Motor neuron (in vitro differentiated cells): ENCODE measurements at regions of chr10 and their contacts with region 1.

Region 1: DNA sequence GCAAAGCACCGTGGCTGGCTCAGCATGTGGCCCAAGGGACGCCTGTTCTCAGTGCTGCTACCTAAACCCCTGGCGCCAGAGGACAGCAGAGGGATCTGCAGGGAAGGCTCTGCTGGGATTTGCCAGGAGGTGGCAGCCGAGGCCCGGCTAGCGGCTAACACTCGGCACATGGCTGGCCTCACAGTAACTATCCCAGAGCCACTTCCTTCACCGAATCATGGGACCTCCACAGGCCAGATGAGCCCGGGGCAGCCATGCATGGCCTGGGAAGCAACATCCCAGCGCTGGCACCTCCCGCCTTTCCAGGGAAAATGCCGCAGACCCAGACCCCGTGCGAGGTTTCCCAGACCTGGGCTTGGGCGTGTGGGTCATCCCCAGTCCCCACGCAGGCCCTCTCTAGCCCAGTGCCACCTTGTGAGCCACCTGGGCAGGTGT is 36.4 kb downstream of the DPYSL4 start:
- ATAC-seq: peak; percentile 97 to 100 (median 99)
- H3K4me3 ChIP-seq: no peak overlapping the region
- H3K27ac ChIP-seq: no peak overlapping the region
- H3K4me1 ChIP-seq: peaks cover 3% of the 10 kb centered on the region in 2 donors

Region 2: GRCh38 chr10:132294561-132295318 is 71.6 kb after region 1 on chr10:
- in situ Hi-C with region 1: no loop called
- ATAC-seq: no peak
- H3K4me3 ChIP-seq: no peak overlapping the region
- H3K27ac ChIP-seq: no peak overlapping the region
- H3K4me1 ChIP-seq: peaks cover 30 to 34% of the 10 kb centered on the region in 2 donors

Region 3: GRCh38 chr10:132331526-132332432 is 108.6 kb after region 1 on chr10 and contains the start of gene LRRC27:
- in situ Hi-C with region 1: loop called in 4 of 9 experiments (anchors 25 kb)
- ATAC-seq: peak; percentile 79 to 93 (median 90)
- H3K4me3 ChIP-seq: peak within 1 kb of the TSS; percentile 67 to 100 (median 90)
- H3K27ac ChIP-seq: peak within 1 kb of the TSS; percentile 50 to 73
- H3K4me1 ChIP-seq: peaks cover 32 to 38% of the 10 kb centered on the region in 2 donors
- total RNA-seq, gene LRRC27: 7.2 to 21.5 (median 15.1) TPM

Region 4: GRCh38 chr10:132347211-132347930 is 124.2 kb after region 1 on chr10:
- in situ Hi-C with region 1: loop called in 6 of 9 experiments (anchors 10 to 25 kb)
- ATAC-seq: no peak
- H3K4me3 ChIP-seq: no peak overlapping the region
- H3K27ac ChIP-seq: no peak overlapping the region
- H3K4me1 ChIP-seq: peaks cover 0 to 2% of the 10 kb centered on the region in 2 donors

Region 5: DNA sequence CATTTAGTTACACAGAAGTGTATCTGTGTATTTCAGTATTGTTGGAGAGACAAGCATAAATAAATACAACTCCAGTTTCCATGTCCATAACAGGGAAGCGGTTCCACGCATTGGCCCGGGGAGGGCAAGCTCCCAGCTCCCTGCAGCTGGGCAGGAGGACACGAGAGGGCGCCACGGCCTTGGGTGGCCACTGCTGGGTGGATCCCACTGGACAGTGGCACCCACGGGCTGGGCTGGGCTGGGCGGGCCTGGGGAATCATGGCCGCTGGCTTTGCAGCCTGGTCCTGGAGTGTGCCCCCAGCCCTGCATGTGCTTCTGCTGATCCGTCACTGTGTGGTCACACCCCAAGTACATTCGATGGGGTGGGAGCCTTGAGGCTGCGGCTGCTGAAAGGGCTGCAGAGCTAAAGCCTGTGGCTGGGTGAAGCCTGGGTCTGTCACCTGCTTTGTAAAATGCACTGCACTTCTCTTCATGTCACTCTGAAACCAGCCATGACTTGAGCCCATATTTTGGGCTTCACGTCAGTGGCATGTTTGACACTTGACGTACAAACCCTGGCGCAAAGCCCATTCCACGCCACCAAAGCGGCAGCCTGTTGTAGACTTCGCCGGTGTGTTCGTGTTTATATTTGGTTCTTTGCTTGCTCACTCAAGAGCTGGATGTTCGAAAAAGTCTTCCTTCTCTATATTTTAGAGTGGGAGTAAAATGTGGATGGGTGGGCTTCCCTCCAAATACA is 136.3 kb after region 1 on chr10:
- in situ Hi-C with region 1: loop called in 1 of 9 experiments (anchors 10 kb)
- ATAC-seq: peak in 1 of 8 experiments; percentile 20
- H3K4me3 ChIP-seq: no peak overlapping the region
- H3K27ac ChIP-seq: no peak overlapping the region
- H3K4me1 ChIP-seq: peaks cover 0 to 4% of the 10 kb centered on the region in 2 donors

Region 6: GRCh38 chr10:132452631-132453469 is 229.7 kb after region 1 on chr10:
- in situ Hi-C with region 1: loop called in 2 of 9 experiments (anchors 10 to 25 kb)
- ATAC-seq: peak; percentile 61 to 85 (median 79)
- H3K4me3 ChIP-seq: peak overlapping the region in 1 of 5 donors; percentile 6
- H3K27ac ChIP-seq: no peak overlapping the region
- H3K4me1 ChIP-seq: peaks cover 5 to 34% of the 10 kb centered on the region in 2 donors

Region 7: GRCh38 chr10:132637477-132638129 is 414.4 kb after region 1 on chr10:
- in situ Hi-C with region 1: loop called in 2 of 9 experiments (anchors 25 kb)
- ATAC-seq: peak; percentile 56 to 96 (median 88)
- H3K4me3 ChIP-seq: no peak overlapping the region
- H3K27ac ChIP-seq: no peak overlapping the region
- H3K4me1 ChIP-seq: peaks cover 0 to 4% of the 10 kb centered on the region in 2 donors

Region 8: GRCh38 chr10:132848291-132848701 is 625.1 kb after region 1 on chr10:
- in situ Hi-C with region 1: no loop called
- ATAC-seq: peak in 5 of 8 experiments; percentile 36 to 65 (median 44)
- H3K4me3 ChIP-seq: no peak overlapping the region
- H3K27ac ChIP-seq: no peak overlapping the region
- H3K4me1 ChIP-seq: peaks cover 0 to 13% of the 10 kb centered on the region in 2 donors